Natural killer cell (primary cell): ENCODE measurements at regions of chr1 and their contacts with region 1.

Region 1: GRCh38 chr1:183956559-183957188 is 80.9 kb downstream of the COLGALT2 start:
- DNase-seq: peak; percentile 43 to 87
- ATAC-seq: peak; percentile 83 to 96 (median 92)
- H3K4me3 ChIP-seq: no peak overlapping the region
- H3K4me3 Mint-ChIP-seq: peak overlapping the region; percentile 77
- H3K27ac ChIP-seq: peak overlapping the region; percentile 86
- H3K27ac Mint-ChIP-seq: no peak overlapping the region
- H3K4me1 ChIP-seq: peaks cover 32% of the 10 kb centered on the region
- H3K4me1 Mint-ChIP-seq: peaks cover 16 to 19% of the 10 kb centered on the region in 2 donors
- H3K27me3 ChIP-seq: no peaks in the 10 kb centered on the region
- H3K27me3 Mint-ChIP-seq: no peaks in the 10 kb centered on the region
- CTCF ChIP-seq: no peak

Region 2: GRCh38 chr1:183968386-183968785 is 11.7 kb after region 1 on chr1:
- intact Hi-C with region 1: loop called (anchors 1 kb)
- DNase-seq: no peak
- ATAC-seq: peak; percentile 7 to 46 (median 18)
- H3K4me3 ChIP-seq: no peak overlapping the region
- H3K4me3 Mint-ChIP-seq: peak overlapping the region; percentile 79
- H3K27ac ChIP-seq: peak overlapping the region; percentile 65
- H3K27ac Mint-ChIP-seq: peak overlapping the region; percentile 90
- H3K4me1 ChIP-seq: peaks cover 29% of the 10 kb centered on the region
- H3K4me1 Mint-ChIP-seq: peaks cover 35 to 63% of the 10 kb centered on the region in 2 donors
- H3K27me3 ChIP-seq: no peaks in the 10 kb centered on the region
- H3K27me3 Mint-ChIP-seq: no peaks in the 10 kb centered on the region
- CTCF ChIP-seq: no peak

Region 3: DNA sequence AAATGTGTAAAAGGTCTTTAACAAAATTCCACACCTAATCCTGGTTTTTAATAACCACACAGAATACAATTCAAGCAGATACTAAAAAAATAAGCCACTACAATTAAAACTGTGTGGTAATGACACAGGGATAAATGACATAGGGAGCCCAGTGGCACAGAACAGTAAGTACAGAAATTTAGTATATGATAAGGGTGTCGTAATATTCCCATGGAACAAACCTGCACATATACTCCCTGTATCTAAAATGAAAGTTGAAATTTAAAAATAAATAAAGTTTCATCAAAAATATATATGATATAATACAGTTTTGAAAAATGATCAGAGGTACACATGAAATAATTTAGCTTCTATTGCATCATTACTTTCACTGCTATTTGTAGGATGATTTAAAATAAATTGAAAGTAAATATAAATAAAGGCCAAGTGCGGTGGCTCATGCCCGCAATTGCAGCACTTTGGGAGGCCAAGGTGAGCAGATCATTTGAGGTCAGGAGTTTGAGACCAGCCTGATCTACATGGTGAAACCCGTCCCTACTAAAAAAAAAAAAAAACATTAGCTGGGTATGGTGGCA is 24.4 kb after region 1 on chr1:
- intact Hi-C with region 1: no loop called
- DNase-seq: no peak
- ATAC-seq: no peak
- H3K4me3 ChIP-seq: no peak overlapping the region
- H3K4me3 Mint-ChIP-seq: no peak overlapping the region
- H3K27ac ChIP-seq: no peak overlapping the region
- H3K27ac Mint-ChIP-seq: no peak overlapping the region
- H3K4me1 ChIP-seq: no peaks in the 10 kb centered on the region
- H3K4me1 Mint-ChIP-seq: peaks cover 8 to 9% of the 10 kb centered on the region in 2 donors
- H3K27me3 ChIP-seq: no peaks in the 10 kb centered on the region
- H3K27me3 Mint-ChIP-seq: no peaks in the 10 kb centered on the region
- CTCF ChIP-seq: no peak

Region 4: DNA sequence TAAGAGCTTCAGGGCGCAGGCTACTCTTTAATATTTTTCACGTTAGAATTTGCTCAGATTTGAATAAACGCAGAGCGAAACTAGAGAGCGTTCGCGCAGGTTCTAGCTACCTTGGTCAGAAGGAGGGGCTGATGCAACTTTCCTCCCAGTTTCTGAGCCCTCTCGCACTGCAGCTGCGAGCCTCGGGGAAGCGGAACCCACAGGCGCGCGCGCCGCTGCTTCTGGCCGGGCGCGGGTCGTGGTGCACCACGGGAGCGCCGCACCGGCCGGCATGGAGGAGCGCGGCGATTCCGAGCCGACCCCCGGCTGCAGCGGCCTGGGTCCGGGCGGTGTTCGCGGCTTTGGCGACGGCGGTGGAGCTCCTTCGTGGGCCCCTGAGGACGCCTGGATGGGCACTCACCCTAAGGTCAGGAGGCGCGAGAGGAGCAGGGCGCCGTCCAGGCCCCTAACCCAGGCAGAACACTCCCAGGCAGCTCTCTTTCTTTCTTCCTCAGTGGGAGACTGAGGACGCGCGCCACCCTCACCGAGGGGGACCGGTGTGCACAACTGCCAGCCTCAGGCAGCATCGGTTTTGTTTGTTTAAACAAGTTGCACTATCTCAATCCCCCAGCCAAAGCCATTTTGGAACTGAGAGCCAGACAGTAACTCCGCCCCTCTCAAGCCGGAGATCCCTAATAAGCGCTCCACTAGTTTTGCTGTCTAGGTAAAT is 95.0 kb after region 1 on chr1 and contains the start of gene TSEN15:
- intact Hi-C with region 1: loop called (anchors 5 kb)
- DNase-seq: peak; percentile 62 to 86
- ATAC-seq: peak; percentile 95 to 97 (median 97)
- H3K4me3 ChIP-seq: peak within 1 kb of the TSS; percentile 94
- H3K4me3 Mint-ChIP-seq: peak within 1 kb of the TSS; percentile 98
- H3K27ac ChIP-seq: peak within 1 kb of the TSS; percentile 73
- H3K27ac Mint-ChIP-seq: peak within 1 kb of the TSS; percentile 90 to 93
- H3K4me1 ChIP-seq: no peaks in the 10 kb centered on the region
- H3K4me1 Mint-ChIP-seq: peaks cover 36 to 39% of the 10 kb centered on the region in 2 donors
- H3K27me3 ChIP-seq: peaks cover 6% of the 10 kb centered on the region
- H3K27me3 Mint-ChIP-seq: peaks cover 13 to 22% of the 10 kb centered on the region in 2 donors
- CTCF ChIP-seq: no peak
- total RNA-seq, gene TSEN15: 29.5 to 52.9 (median 34.3) TPM

Region 5: DNA sequence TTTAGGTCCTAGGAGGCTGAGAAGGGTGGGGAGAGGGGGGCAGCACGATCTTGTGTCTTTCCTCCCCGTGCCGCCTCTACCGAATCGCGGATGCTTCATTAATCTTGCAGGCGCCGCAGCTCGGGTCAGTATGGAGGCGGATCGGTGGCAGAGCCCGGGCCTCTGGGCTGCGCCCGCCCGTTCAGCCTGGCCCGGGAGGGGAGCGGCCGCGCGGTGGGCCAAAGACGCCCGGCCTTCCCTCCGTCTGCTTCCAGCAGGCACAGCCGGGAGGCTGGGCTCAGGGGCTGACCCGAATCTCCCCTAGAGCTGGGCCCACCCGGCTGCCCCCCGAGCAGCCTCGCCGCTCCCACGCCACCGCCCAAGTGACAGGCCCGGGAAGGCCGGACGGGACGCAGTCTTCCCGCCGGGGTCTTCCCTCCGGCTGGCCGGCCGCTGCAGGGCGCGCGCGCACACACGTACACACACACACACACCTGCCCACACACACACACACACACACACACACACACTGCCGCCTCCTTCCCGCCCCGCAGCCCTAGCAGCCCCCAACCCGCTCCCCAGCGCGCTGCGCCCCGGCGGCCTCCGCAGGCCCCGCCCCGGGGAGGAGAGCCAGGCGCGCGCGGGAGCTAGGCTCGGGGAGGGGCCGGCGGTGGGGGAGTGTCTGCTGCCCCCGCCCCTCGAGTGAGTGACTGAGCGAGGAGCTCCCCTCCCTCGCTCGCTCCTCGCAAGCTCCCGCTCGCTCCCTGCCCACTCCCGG is 429.8 kb after region 1 on chr1 and contains the start of gene C1orf21:
- intact Hi-C with region 1: loop called (anchors 5 kb)
- DNase-seq: peak; percentile 81 to 90
- ATAC-seq: peak; percentile 77 to 88 (median 79)
- H3K4me3 ChIP-seq: peak within 1 kb of the TSS; percentile 84
- H3K4me3 Mint-ChIP-seq: peak within 1 kb of the TSS; percentile 90
- H3K27ac ChIP-seq: peak within 1 kb of the TSS; percentile 93
- H3K27ac Mint-ChIP-seq: peak within 1 kb of the TSS; percentile 92 to 96
- H3K4me1 ChIP-seq: peaks cover 12% of the 10 kb centered on the region
- H3K4me1 Mint-ChIP-seq: peaks cover 55 to 58% of the 10 kb centered on the region in 2 donors
- H3K27me3 ChIP-seq: no peaks in the 10 kb centered on the region
- H3K27me3 Mint-ChIP-seq: no peaks in the 10 kb centered on the region
- CTCF ChIP-seq: no peak
- total RNA-seq, gene C1orf21: 84.3 to 111 (median 88.3) TPM